ENCODE measurements at regions of chr5 and their contacts with region 1.

Region 1: GRCh38 chr5:129852747-129853352 is 51.4 kb upstream of the CHSY3 start:
- DNase-seq: peak; percentile 7
- CTCF ChIP-seq: peak; percentile 96

Region 2: DNA sequence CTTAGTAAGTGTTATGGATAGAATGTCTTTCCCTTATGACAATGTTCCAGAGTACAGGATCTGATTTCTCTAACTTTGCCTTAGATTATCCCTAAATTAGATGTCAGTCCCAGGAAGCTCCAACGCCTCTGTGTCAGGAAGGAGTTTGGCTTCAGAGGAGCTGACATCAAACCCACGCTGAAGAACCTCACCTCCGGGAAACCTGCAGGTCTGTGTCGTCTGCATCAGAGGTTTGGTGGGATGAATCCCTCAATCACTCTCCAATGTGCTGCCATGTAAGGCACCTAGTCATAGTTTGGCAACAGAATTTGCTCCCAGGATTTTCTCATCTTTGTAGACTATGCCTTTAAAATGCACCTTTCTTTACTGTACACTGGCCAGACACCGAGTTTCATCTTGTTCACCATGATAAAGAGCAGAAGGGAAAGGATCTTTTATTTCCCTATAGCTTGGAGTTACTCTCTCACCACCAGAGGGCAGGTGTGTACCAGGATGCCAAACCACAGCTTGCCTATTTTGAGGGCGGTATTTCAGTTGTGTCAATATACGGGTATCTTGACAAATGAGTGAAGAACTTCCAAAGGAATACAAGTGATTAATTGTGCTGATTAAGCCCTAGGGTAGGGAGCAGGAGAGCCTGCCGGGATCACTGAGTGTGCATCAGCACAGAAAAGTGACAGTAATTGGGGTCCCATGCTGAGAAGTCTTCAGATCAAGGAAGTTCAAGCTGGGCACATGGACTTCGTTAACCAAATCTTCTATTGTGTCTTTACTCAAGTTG is 81.6 kb before region 1 on chr5:
- in situ Hi-C with region 1: loop called (anchors 10 kb)
- DNase-seq: peak; percentile 40
- CTCF ChIP-seq: peak; percentile 55

Region 3: GRCh38 chr5:130109152-130109551 is 256.3 kb after region 1 on chr5:
- in situ Hi-C with region 1: no loop called
- DNase-seq: peak; percentile 10
- CTCF ChIP-seq: peak; percentile 43